K562 (cell line): ENCODE measurements at regions of chr20 and their contacts with region 1.

Region 1: DNA sequence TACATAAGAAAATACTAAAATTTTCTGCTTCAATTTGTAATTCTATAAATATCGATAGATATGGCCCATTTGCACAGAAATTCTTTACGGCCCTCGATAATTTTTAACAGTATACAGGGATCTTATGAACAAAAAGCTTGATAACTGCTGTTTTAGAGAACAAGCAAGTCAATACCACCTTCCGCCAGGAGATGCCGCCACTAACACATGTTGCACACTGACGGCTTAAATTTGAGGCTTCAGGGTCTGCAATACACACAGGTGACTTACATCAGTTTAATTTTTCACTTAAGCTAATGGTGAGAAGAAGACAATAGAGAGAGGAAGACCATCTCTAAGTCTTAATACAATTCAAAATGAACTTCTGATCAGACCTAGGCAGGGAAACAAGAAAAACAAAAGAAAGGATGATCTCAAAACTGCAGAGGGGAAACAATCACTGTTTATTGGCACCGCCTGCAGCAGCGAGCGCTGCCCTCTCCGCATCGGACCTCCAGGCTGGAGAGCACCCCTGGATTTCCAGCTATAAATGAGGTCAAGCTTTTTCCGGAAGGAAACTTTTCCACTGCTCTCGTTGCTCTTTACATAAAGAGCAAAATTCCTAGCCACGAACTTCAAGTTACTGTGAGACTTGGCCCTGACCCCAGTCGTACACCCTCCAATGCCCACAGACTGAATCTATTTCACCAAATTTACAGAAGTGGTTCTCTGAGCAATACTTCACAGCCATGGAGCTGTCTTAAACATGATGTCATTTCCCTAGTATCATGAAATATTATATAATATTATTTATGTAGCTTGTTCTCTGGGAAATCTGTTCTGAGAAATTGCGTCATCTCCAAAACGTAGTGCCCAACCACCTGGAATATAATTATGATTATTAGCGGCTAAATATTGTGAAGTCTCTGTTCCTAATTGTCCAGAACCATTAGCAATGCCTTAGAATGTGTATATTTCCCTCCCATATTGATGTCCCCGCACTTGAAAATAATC is 54.1 kb downstream of the OTOR start:
- DNase-seq: peak; percentile 17 to 58 (median 34)
- ATAC-seq: peak; percentile 79
- H3K4me3 ChIP-seq: no peak overlapping the region
- H3K27ac ChIP-seq: no peak overlapping the region
- H3K4me1 ChIP-seq: no peaks in the 10 kb centered on the region
- H3K27me3 ChIP-seq: no peaks in the 10 kb centered on the region
- CTCF ChIP-seq: peak; percentile 52 to 69 (median 65)
- EP300 ChIP-seq: no peak
- POLR2A ChIP-seq: no peak
- RAD21 ChIP-seq: peak; percentile 46 to 64

Region 2: DNA sequence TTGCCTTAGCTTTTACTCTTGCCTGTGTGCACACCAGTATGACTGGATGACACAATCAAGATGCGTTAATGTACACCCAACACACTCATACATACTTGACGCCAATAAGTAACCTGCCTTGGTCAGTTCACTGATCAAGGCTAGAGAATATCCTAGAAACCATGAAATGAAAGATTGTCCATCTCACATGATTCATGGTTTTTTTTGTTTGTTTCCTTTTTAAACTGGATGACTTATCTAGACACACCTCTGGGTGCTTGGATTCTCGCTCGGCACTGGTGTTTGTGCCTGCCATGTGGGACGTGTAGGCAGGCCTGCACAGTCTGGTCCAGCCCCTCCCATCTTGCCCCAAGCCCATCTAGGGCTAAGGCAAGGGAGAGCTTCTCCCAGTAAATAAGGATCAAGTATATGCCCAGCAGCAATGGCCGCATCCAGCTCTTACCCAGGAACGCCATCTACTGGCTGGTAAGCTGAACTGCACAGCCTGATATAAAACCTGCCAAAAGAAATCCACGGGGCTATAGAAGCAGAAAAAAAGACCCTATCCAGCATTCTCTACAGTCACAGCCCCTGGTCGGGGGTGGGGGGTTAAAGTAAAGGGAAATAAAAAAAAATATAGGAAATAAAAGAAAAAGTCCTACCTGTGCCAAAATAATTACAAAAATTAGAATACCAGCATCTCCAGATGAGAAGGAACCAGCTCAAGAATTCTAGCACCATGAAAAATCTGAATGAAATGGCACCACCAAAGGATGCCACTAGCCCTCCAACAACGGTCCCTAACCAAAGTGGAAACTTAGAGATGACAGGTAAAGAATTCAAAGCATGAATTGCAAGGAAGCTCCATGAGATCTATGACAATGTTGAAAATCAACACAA is 19.2 kb after region 1 on chr20:
- CTCF ChIA-PET with region 1: interaction called, 6 read pairs
- POLR2A ChIA-PET with region 1: interaction called, 3 read pairs
- in situ Hi-C with region 1: no loop called
- intact Hi-C with region 1: loop called (anchors 1 kb)
- DNase-seq: peak; percentile 28 to 36 (median 31)
- ATAC-seq: peak; percentile 74
- H3K4me3 ChIP-seq: no peak overlapping the region
- H3K27ac ChIP-seq: no peak overlapping the region
- H3K4me1 ChIP-seq: no peaks in the 10 kb centered on the region; a peak in 1 of 5 replicates
- H3K27me3 ChIP-seq: no peaks in the 10 kb centered on the region
- CTCF ChIP-seq: peak; percentile 62 to 73 (median 71)
- EP300 ChIP-seq: no peak
- POLR2A ChIP-seq: no peak
- RAD21 ChIP-seq: peak; percentile 17 to 52; a peak in 3 of 4 replicates

Region 3: GRCh38 chr20:17281478-17281877 is 479.3 kb after region 1 on chr20:
- CTCF ChIA-PET with region 1: no interaction called
- POLR2A ChIA-PET with region 1: no interaction called
- in situ Hi-C with region 1: no loop called
- intact Hi-C with region 1: loop called (anchors 5 kb)
- DNase-seq: peak; percentile 4 to 38 (median 9)
- ATAC-seq: peak; percentile 60
- H3K4me3 ChIP-seq: no peak overlapping the region
- H3K27ac ChIP-seq: no peak overlapping the region
- H3K4me1 ChIP-seq: no peaks in the 10 kb centered on the region
- H3K27me3 ChIP-seq: no peaks in the 10 kb centered on the region
- CTCF ChIP-seq: peak; percentile 31 to 46 (median 38); a peak in 5 of 6 replicates
- EP300 ChIP-seq: no peak
- POLR2A ChIP-seq: no peak
- RAD21 ChIP-seq: no peak; a peak in 1 of 4 replicates

Region 4: DNA sequence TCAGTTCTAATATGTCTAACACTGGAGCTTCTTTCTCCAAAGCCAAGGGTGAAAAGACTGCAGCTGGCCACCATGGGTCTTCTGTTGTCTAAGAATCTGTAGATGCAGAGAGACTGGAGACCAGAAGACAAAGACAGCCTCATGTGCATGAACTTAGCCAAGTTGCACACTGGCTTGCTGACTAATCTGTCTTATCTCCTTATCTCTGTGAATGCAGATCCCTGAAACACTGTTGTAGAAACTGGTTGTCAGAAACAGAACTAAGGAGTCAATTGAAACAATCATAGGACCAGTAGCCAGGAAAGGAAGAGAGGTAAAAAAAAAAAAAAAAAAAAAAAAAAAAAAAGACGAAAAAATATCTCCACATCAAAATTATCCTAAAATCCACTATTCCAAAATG is 619.3 kb after region 1 on chr20:
- CTCF ChIA-PET with region 1: no interaction called
- POLR2A ChIA-PET with region 1: no interaction called
- in situ Hi-C with region 1: loop called (anchors 10 kb)
- intact Hi-C with region 1: no loop called
- DNase-seq: no peak
- ATAC-seq: no peak
- H3K4me3 ChIP-seq: no peak overlapping the region
- H3K27ac ChIP-seq: no peak overlapping the region
- H3K4me1 ChIP-seq: no peaks in the 10 kb centered on the region
- H3K27me3 ChIP-seq: no peaks in the 10 kb centered on the region
- CTCF ChIP-seq: no peak
- EP300 ChIP-seq: no peak
- POLR2A ChIP-seq: no peak
- RAD21 ChIP-seq: no peak

Region 5: GRCh38 chr20:17431621-17432364 is 629.6 kb after region 1 on chr20:
- CTCF ChIA-PET with region 1: interaction called, 13 read pairs
- POLR2A ChIA-PET with region 1: no interaction called
- in situ Hi-C with region 1: loop called (anchors 10 kb)
- intact Hi-C with region 1: loop called (anchors 2 kb)
- DNase-seq: peak; percentile 49 to 65 (median 63)
- ATAC-seq: peak; percentile 74
- H3K4me3 ChIP-seq: no peak overlapping the region
- H3K27ac ChIP-seq: no peak overlapping the region
- H3K4me1 ChIP-seq: peaks cover 0 to 4% of the 10 kb centered on the region in 2 experiments; a peak in 1 of 5 replicates
- H3K27me3 ChIP-seq: peaks cover 0 to 8% of the 10 kb centered on the region in 2 experiments; a peak in 1 of 5 replicates
- CTCF ChIP-seq: peak; percentile 61 to 71 (median 64)
- EP300 ChIP-seq: no peak
- POLR2A ChIP-seq: no peak
- RAD21 ChIP-seq: peak; percentile 38 to 65

Region 6: GRCh38 chr20:18276821-18277220 is 1474.6 kb after region 1 on chr20:
- CTCF ChIA-PET with region 1: no interaction called
- POLR2A ChIA-PET with region 1: no interaction called
- in situ Hi-C with region 1: no loop called
- intact Hi-C with region 1: loop called (anchors 10 kb)
- DNase-seq: peak; percentile 20 to 77 (median 40)
- ATAC-seq: peak; percentile 97
- H3K4me3 ChIP-seq: no peak overlapping the region
- H3K27ac ChIP-seq: no peak overlapping the region
- H3K4me1 ChIP-seq: no peaks in the 10 kb centered on the region; a peak in 1 of 5 replicates
- H3K27me3 ChIP-seq: peaks cover 0 to 2% of the 10 kb centered on the region in 2 experiments; a peak in 4 of 5 replicates
- CTCF ChIP-seq: peak; percentile 78 to 82 (median 82)
- EP300 ChIP-seq: no peak
- POLR2A ChIP-seq: no peak
- RAD21 ChIP-seq: peak; percentile 55 to 77